WTC11 (cell line): ENCODE measurements at regions of chr5 and their contacts with region 1.

Region 1: DNA sequence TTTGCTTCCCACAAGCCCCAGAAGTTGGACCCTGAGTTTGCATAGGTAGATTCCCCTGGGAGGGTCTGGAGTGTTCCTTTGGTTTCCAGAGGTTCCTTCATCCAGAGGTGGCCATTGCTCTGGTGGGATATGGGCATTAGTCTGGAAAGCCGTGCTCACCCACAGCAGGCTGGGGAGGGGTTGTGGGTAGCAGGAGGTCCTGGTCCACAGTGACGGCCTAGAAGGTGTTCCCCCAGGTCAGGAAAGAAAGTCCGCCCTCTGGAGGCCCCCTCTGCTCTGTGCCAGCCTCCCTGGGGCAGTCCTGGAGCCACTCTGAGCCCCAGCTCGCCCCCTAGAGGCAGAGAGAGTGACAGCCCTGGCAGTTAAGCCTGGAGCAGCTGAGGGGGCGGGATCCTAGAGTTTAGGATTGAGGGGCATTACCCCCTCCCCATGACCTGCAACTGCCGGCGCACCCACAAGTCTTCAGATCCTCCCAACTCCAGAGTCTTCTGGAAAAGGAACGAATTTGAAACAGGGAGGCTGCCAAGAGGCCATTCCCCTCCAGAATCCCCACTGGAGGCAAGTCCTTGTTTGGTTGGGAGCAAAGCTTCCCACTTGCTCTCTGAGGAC is 36.8 kb downstream of the NDST1 start:
- DNase-seq: peak; percentile 94
- ATAC-seq: peak; percentile 99
- H3K4me3 Mint-ChIP-seq: no peak overlapping the region
- H3K27ac Mint-ChIP-seq: no peak overlapping the region
- H3K4me1 Mint-ChIP-seq: no peaks in the 10 kb centered on the region
- H3K27me3 Mint-ChIP-seq: no peaks in the 10 kb centered on the region
- CTCF ChIP-seq: peak; percentile 90

Region 2: GRCh38 chr5:150092159-150092787 is 452.4 kb before region 1 on chr5:
- CTCF ChIA-PET with region 1: no interaction called
- POLR2A ChIA-PET with region 1: no interaction called
- DNase-seq: no peak
- ATAC-seq: no peak
- H3K4me3 Mint-ChIP-seq: no peak overlapping the region
- H3K27ac Mint-ChIP-seq: no peak overlapping the region
- H3K4me1 Mint-ChIP-seq: 0 out of 2 replicates have a peak, but pooled peaks cover 2% of the 10 kb centered on the region
- H3K27me3 Mint-ChIP-seq: peaks cover 2% of the 10 kb centered on the region; the same call in 1 of the 2 replicates
- CTCF ChIP-seq: no peak

Region 3: GRCh38 chr5:150449517-150450339 is 95.0 kb before region 1 on chr5 and contains the start of gene RPS14:
- CTCF ChIA-PET with region 1: interaction called, 17 read pairs
- POLR2A ChIA-PET with region 1: no interaction called
- DNase-seq: peak; percentile 90
- ATAC-seq: peak; percentile 86
- H3K4me3 Mint-ChIP-seq: peak within 1 kb of the TSS; percentile 100
- H3K27ac Mint-ChIP-seq: peak within 1 kb of the TSS; percentile 99
- H3K4me1 Mint-ChIP-seq: peaks cover 30% of the 10 kb centered on the region
- H3K27me3 Mint-ChIP-seq: no peaks in the 10 kb centered on the region; the same call in 1 of the 2 replicates
- CTCF ChIP-seq: peak; percentile 92
- total RNA-seq, gene RPS14: 2,564 to 2,814 TPM (median 2,812 TPM) in 3 replicates

Region 4: DNA sequence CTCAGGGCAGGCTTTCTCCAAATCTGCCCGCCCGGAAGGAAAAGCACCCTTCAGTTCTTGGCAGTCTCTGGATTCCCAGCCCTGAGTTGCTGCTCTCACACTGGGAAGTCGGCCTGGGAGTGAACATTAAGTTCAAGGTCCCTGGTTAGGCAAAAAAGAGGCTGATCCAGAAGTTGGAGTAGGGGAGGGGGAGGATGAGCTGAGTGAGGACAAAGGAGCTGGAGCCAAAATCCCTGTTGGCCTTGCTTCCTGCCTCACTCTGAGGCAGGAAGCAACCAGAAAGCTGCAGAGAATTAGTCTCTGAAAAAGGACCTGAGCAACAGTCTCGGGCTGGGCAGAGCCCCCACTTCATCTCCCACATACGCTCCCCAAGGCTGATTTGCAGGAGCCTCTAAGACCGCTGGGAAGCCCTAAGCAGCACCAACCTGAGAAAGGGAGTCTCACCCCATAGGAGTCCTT is 80.1 kb before region 1 on chr5:
- CTCF ChIA-PET with region 1: interaction called, 75 read pairs
- POLR2A ChIA-PET with region 1: no interaction called
- DNase-seq: no peak
- ATAC-seq: peak; percentile 66
- H3K4me3 Mint-ChIP-seq: no peak overlapping the region
- H3K27ac Mint-ChIP-seq: peak overlapping the region; percentile 68; the same call in 1 of the 2 replicates
- H3K4me1 Mint-ChIP-seq: peaks cover 45% of the 10 kb centered on the region
- H3K27me3 Mint-ChIP-seq: no peaks in the 10 kb centered on the region
- CTCF ChIP-seq: no peak

Region 5: GRCh38 chr5:150497274-150497988 is 47.3 kb before region 1 on chr5:
- CTCF ChIA-PET with region 1: interaction called, 14 read pairs
- POLR2A ChIA-PET with region 1: no interaction called
- DNase-seq: no peak
- ATAC-seq: no peak
- H3K4me3 Mint-ChIP-seq: no peak overlapping the region
- H3K27ac Mint-ChIP-seq: peak overlapping the region; percentile 92
- H3K4me1 Mint-ChIP-seq: peaks cover 64% of the 10 kb centered on the region
- H3K27me3 Mint-ChIP-seq: no peaks in the 10 kb centered on the region
- CTCF ChIP-seq: no peak

Region 6: GRCh38 chr5:150523472-150524350 is 21.0 kb before region 1 on chr5:
- CTCF ChIA-PET with region 1: interaction called, 14 read pairs
- POLR2A ChIA-PET with region 1: no interaction called
- DNase-seq: peak; percentile 48
- ATAC-seq: peak; percentile 74
- H3K4me3 Mint-ChIP-seq: no peak overlapping the region
- H3K27ac Mint-ChIP-seq: peak overlapping the region; percentile 96
- H3K4me1 Mint-ChIP-seq: peaks cover 46% of the 10 kb centered on the region
- H3K27me3 Mint-ChIP-seq: no peaks in the 10 kb centered on the region
- CTCF ChIP-seq: 0 out of 2 replicates have a peak, but pooled peaks have one; percentile 12

Region 7: DNA sequence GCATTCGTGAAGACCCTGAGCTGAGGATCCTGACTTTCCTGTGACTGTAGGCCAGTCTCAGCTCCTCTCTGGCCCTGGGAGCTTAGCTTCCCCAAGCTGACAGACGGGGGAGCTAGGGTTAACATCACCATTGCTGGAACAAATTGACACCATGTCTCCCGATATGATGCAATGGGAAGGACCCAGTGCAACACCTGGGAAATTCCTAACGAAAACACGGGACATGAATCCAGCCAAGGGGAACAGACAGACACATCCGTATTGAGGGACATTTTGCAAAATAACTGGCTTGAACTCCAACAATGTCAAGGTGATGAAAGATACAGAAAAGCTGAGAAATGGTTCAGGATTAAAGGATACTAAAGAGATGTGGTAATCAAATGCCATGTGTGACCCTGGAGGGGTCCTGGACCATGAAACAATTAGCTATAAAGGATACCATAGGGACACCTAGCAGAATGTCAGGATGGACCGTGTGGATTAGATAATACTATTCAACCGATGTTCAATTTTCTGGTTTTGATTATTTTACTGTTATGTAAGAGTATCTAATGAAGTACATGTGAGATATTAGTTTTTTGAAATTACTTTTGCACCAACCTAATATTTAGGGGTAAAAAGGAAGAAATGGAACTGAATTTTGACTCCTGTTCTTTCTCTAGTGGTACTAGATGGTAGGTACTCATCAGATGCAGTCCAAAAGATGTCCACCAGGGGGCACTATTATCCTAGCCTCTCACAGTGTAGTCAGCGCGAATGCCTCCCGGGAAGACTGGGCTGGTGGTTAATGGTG is 15.9 kb after region 1 on chr5:
- CTCF ChIA-PET with region 1: interaction called, 34 read pairs
- POLR2A ChIA-PET with region 1: no interaction called
- DNase-seq: peak; percentile 91
- ATAC-seq: peak; percentile 82
- H3K4me3 Mint-ChIP-seq: no peak overlapping the region
- H3K27ac Mint-ChIP-seq: peak overlapping the region; percentile 86
- H3K4me1 Mint-ChIP-seq: peaks cover 15% of the 10 kb centered on the region
- H3K27me3 Mint-ChIP-seq: no peaks in the 10 kb centered on the region
- CTCF ChIP-seq: peak; percentile 93